Heart left ventricle (tissue), 16 donors: ENCODE measurements at regions of chr2 and their contacts with region 1.

Region 1: DNA sequence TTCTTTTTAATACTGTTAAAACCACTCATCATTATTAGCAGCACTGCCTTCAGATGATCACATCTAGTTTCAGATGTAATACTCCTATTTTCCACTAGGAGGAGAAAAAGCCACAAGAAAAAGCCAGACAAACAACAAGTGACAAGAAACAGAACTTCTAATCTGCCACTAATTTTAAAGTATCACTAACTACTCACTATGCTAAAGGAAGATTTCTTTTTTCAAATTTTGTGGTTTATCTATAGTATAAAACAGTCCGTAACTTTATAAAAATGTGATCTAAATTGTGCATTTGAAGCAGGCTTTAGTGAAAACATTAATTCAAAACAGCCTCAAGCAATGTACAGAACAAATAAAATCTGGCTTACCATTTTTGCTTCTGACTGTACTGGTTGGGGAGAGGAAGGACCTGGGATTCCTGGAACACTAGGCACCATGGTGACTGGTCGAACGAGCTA is 56.8 kb downstream of the ATF2 start:
- DNase-seq: no peak
- ATAC-seq: peak in 1 of 4 donors; percentile 53
- H3K4me3 ChIP-seq: no peak overlapping the region
- H3K27ac ChIP-seq: no peak overlapping the region
- H3K4me1 ChIP-seq: no peaks in the 10 kb centered on the region
- H3K27me3 ChIP-seq: no peaks in the 10 kb centered on the region
- CTCF ChIP-seq: peak; percentile 72 to 87 (median 78)
- POLR2A ChIP-seq: no peak

Region 2: DNA sequence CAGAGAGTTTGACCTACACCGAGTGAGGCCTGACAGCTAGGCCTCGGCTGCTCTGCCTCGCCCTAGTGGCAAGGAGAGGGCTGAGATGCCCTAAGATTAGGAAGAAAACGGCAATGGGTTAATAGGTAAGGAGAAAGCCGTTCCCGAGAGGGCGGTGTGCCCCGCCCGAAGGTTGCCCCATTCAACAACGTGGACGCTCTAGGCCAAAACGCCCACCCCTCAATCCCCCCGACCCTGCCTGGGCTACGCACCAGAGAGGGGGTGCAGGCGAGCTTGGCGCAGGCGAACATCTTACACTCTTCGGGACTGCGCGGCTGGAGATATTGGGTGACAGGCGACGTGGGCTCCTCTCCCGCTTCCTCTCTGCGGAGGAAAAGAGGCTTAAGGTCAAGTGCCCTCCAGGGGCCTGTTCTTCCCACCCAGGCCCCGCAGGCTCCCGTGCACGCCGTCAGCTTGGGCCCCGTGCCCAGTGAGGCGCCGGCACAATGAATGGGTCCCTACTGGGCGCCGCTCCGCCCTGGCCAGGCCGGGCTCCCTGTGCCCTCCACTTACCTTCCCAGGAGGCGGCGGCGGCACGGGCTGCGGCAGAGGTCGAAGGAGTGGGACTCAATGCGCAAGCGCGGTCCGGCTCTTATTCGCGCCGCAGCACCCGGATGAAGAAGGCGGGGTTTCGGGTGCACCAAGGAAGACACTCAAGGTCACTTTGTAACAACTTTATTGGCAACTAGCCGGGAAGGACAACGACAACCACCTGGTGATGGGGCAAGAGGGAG is 70.1 kb after region 1 on chr2 and contains the start of gene ATP5MC3:
- intact Hi-C with region 1: loop called in 4 of 10 experiments (anchors 5 to 10 kb)
- DNase-seq: peak; percentile 93 to 98 (median 97)
- ATAC-seq: peak; percentile 93 to 98 (median 96)
- H3K4me3 ChIP-seq: peak within 1 kb of the TSS; percentile 65 to 98 (median 90)
- H3K27ac ChIP-seq: peak within 1 kb of the TSS; percentile 93 to 98 (median 96)
- H3K4me1 ChIP-seq: peaks cover 0 to 42% (median 29%) of the 10 kb centered on the region in 12 donors
- H3K27me3 ChIP-seq: no peaks in the 10 kb centered on the region
- CTCF ChIP-seq: peak in 3 of 12 donors; percentile 3 to 35 (median 19)
- POLR2A ChIP-seq: peak; percentile 80 to 91
- total RNA-seq, gene ATP5MC3: 474 to 1,123 (median 986) TPM

Region 3: DNA sequence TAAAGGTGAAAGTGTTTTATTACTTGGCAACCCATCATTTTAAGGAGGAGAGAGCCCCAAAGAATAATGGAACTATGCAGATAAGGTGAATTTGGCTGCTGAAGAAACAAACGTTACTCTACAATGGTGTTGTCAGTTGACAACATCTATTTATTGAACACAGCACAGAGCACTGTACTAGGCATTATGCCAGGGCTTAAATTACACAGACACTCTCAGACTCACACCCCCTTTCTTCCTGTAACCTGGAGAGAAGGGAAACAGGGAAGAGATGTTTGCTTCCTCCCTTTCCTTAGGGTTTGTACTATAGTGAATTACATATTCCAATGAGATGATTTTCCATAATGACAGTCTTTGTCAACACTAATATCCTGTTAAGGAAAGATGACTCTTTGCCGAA is 164.3 kb after region 1 on chr2:
- intact Hi-C with region 1: loop called in 7 of 10 experiments (anchors 5 to 10 kb)
- DNase-seq: no peak
- ATAC-seq: peak; percentile 61 to 67 (median 62)
- H3K4me3 ChIP-seq: no peak overlapping the region
- H3K27ac ChIP-seq: no peak overlapping the region
- H3K4me1 ChIP-seq: peaks cover 0 to 5% (median 0%) of the 10 kb centered on the region in 12 donors
- H3K27me3 ChIP-seq: peaks cover 0 to 8% (median 0%) of the 10 kb centered on the region in 9 donors
- CTCF ChIP-seq: no peak
- POLR2A ChIP-seq: no peak